CD8-positive, alpha-beta T cell (primary cell): ENCODE measurements at regions of chr7 and their contacts with region 1.

Region 1: DNA sequence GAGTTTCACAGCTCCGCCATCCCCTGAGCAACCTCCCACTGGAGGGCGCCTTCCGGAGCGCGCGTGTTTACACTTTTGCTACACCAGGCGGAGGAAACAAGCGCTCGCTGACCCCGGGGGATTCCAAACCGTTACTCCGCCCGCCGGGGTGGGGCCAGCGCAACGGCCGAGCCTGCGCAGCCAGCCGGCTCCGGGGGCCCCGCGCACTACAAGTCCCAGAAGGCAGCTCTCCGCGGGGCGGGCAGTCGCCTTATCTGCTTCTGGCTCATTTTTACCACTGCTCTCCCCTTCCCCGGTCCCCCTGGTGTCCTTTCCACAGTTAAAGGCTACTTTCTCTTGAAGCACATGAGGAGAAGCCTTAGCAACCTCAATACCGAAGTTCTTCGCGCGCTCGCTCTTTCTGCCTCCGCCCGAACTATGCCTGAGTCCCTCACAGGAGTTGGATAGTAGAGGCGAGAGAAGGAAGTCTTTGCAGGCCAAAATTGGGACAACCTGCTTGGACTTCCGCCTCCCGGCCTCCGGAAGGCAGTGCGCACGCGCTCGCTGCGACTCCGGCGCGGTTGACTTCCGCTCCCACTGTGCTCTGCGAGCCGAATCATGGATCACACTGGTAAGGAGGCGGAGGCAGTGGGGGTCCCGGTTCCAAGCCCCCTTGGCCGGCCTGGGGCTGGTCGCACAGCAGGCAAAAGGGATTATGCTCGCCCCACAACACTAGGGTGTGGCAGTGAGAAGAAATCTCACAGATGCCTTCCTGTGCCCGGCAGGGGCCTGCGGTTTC is at the start of gene CBLL1:
- DNase-seq: peak; percentile 96 to 99 (median 98)
- ATAC-seq: peak; percentile 91
- H3K4me3 ChIP-seq: peak within 1 kb of the TSS; percentile 90 to 99
- H3K4me3 Mint-ChIP-seq: peak within 1 kb of the TSS; percentile 92
- H3K27ac ChIP-seq: peak within 1 kb of the TSS; percentile 99
- H3K27ac Mint-ChIP-seq: peak within 1 kb of the TSS; percentile 100
- H3K4me1 ChIP-seq: peaks cover 46% of the 10 kb centered on the region
- H3K4me1 Mint-ChIP-seq: peaks cover 59% of the 10 kb centered on the region
- H3K27me3 ChIP-seq: no peaks in the 10 kb centered on the region
- H3K27me3 Mint-ChIP-seq: no peaks in the 10 kb centered on the region
- CTCF ChIP-seq: peak; percentile 68
- total RNA-seq, gene CBLL1: 68.5 to 71.6 TPM

Region 2: GRCh38 chr7:107579885-107580715 is 163.7 kb before region 1 on chr7 and contains the start of gene BCAP29:
- CTCF ChIA-PET with region 1: interaction called, 3 read pairs
- POLR2A ChIA-PET with region 1: no interaction called
- intact Hi-C with region 1: loop called (anchors 5 kb)
- DNase-seq: peak; percentile 22 to 87 (median 59)
- ATAC-seq: peak; percentile 95
- H3K4me3 ChIP-seq: peak within 1 kb of the TSS; percentile 81 to 91
- H3K4me3 Mint-ChIP-seq: peak within 1 kb of the TSS; percentile 90
- H3K27ac ChIP-seq: peak within 1 kb of the TSS; percentile 67 to 69
- H3K27ac Mint-ChIP-seq: peak within 1 kb of the TSS; percentile 91
- H3K4me1 ChIP-seq: peaks cover 14% of the 10 kb centered on the region
- H3K4me1 Mint-ChIP-seq: peaks cover 25% of the 10 kb centered on the region
- H3K27me3 ChIP-seq: no peaks in the 10 kb centered on the region
- H3K27me3 Mint-ChIP-seq: no peaks in the 10 kb centered on the region
- CTCF ChIP-seq: no peak
- total RNA-seq, gene BCAP29: 7.9 to 9.0 TPM

Region 3: DNA sequence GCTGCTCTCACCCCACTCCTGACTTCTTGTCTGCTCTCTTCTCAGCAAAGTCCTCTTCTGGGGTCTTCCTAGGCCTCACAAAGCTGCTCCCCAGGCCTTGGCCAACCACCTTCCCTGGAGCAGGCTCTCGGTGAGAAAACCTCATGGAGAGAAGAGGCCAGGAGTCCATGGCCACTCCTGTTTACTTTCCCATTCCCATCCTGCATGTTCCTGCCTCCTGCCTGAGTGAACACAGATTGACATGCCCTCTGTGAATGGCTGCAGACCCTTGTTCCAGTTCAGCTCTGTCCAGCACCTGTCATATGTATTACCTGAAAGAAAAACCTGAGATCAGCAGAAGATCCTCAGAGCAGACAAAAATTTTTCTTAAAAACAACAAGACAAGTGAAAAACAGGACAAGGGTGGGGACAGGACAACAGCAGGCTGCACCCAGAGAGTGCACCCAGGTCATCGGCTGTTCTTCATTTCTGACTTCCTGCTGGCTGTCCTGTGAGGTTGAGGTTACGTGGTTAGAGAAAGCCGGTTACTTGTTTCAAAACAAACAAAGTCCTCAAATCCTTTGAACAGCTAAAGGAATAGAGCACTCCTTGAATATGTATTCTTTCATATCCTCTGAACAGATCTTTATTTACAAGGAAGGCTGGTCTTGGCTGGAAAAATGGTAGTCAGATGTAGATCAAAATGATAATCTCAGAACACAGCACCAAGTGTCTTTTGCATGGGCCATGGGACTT is 113.2 kb after region 1 on chr7:
- CTCF ChIA-PET with region 1: interaction called, 4 read pairs
- POLR2A ChIA-PET with region 1: interaction called, 14 read pairs
- intact Hi-C with region 1: loop called in 1 of 2 experiments (anchors 5 kb)
- DNase-seq: peak in 6 of 9 experiments; percentile 16 to 69 (median 38)
- ATAC-seq: no peak
- H3K4me3 ChIP-seq: no peak overlapping the region
- H3K4me3 Mint-ChIP-seq: peak overlapping the region; percentile 40
- H3K27ac ChIP-seq: peak overlapping the region in 1 of 2 experiments; percentile 82
- H3K27ac Mint-ChIP-seq: peak overlapping the region; percentile 86
- H3K4me1 ChIP-seq: peaks cover 25% of the 10 kb centered on the region
- H3K4me1 Mint-ChIP-seq: peaks cover 41% of the 10 kb centered on the region
- H3K27me3 ChIP-seq: no peaks in the 10 kb centered on the region
- H3K27me3 Mint-ChIP-seq: no peaks in the 10 kb centered on the region
- CTCF ChIP-seq: no peak

Region 4: DNA sequence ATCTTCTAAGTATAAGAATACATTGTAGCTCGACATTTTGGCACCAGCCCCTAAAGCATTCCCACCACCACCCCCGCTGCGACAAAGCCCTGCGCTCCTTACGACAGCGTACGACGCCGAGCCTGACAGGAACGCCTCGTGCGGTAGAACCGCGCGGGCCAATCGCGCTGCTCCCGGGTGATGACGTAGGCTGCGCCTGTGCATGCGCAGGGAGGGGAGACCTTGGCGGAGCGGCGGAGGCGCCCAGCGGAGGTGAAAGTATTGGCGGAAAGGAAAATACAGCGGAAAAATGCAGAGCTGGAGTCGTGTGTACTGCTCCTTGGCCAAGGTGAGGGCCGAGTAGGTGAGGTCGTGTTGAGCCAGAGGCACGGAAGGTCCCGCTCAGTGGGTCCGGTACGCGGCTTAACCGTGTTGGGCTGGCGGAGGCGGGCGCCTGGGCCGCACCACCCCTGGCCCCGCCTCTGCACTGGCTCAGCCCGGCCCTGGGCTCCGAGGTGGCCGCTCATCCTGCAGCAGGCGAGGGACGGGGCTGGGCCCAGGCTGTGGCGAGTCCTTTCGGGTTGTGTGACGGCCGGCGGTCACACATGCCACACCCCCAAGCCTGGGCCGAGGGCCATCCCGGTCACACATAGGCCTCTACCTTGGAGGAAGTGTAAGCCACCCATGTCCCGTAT is 147.3 kb after region 1 on chr7 and contains the start of gene DLD:
- CTCF ChIA-PET with region 1: interaction called, 9 read pairs
- POLR2A ChIA-PET with region 1: interaction called, 25 read pairs
- intact Hi-C with region 1: loop called in 1 of 2 experiments (anchors 1 kb)
- DNase-seq: peak; percentile 86 to 97 (median 93)
- ATAC-seq: peak; percentile 97
- H3K4me3 ChIP-seq: peak within 1 kb of the TSS; percentile 79 to 86
- H3K4me3 Mint-ChIP-seq: peak within 1 kb of the TSS; percentile 98
- H3K27ac ChIP-seq: peak within 1 kb of the TSS; percentile 88 to 94
- H3K27ac Mint-ChIP-seq: peak within 1 kb of the TSS; percentile 98
- H3K4me1 ChIP-seq: peaks cover 48% of the 10 kb centered on the region
- H3K4me1 Mint-ChIP-seq: peaks cover 48% of the 10 kb centered on the region
- H3K27me3 ChIP-seq: no peaks in the 10 kb centered on the region
- H3K27me3 Mint-ChIP-seq: no peaks in the 10 kb centered on the region
- CTCF ChIP-seq: no peak
- total RNA-seq, gene DLD: 83.5 to 85.9 TPM